Mammary epithelial cell (primary cell): ENCODE measurements at regions of chr1 and their contacts with region 1.

Region 1: GRCh38 chr1:54239631-54240031 is 39.7 kb downstream of the MRPL37 start:
- DNase-seq: no peak
- H3K4me3 ChIP-seq: no peak overlapping the region
- H3K27ac ChIP-seq: no peak overlapping the region
- H3K4me1 ChIP-seq: no peaks in the 10 kb centered on the region
- H3K27me3 ChIP-seq: no peaks in the 10 kb centered on the region
- CTCF ChIP-seq: no peak

Region 2: DNA sequence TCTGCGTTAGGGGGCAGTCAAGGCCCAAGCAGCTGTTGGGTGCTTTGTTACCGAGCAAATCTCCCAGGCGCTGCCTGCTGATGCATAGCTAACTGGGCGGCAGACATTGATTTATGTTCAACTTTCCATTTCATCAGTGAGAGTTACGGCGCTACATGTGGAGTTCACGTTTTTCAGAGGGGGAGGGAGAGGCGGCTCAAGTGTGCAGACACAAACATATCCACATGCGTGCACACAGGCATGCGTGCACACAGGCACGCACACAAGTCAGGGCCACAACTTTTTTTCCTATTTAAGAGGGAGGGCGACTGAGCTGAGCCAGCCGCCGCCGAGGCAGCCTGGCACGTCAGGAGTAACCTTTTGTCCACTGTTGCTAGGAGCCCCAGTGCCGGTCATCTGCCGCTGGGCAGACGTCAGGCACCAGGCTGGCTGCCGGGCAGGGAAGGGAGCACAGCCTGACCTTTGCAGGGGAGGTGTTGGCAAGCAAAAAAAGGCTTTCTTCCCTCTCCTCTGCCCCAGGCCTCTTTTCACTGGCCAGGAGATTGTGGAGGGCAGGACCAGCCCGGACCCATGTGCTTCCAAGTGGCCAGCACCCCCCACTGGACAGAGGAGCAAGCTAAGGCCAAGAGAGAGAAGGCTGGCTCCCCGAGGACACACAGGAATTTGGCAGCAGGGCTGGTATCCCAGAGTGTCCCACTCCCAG is 33.6 kb after region 1 on chr1:
- CTCF ChIA-PET with region 1: no interaction called
- dilution Hi-C with region 1: loop called (anchors 5 kb)
- in situ Hi-C with region 1: no loop called
- intact Hi-C with region 1: no loop called
- DNase-seq: no peak
- H3K4me3 ChIP-seq: no peak overlapping the region
- H3K27ac ChIP-seq: no peak overlapping the region
- H3K4me1 ChIP-seq: peaks cover 20% of the 10 kb centered on the region
- H3K27me3 ChIP-seq: no peaks in the 10 kb centered on the region
- CTCF ChIP-seq: no peak

Region 3: GRCh38 chr1:54506594-54506993 is 267.0 kb after region 1 on chr1:
- CTCF ChIA-PET with region 1: no interaction called
- dilution Hi-C with region 1: no loop called
- in situ Hi-C with region 1: no loop called
- intact Hi-C with region 1: no loop called
- DNase-seq: no peak
- H3K4me3 ChIP-seq: no peak overlapping the region
- H3K27ac ChIP-seq: no peak overlapping the region
- H3K4me1 ChIP-seq: peaks cover under 1% of the 10 kb centered on the region
- H3K27me3 ChIP-seq: no peaks in the 10 kb centered on the region
- CTCF ChIP-seq: no peak